Dorsolateral prefrontal cortex (tissue), 120 donors: ENCODE measurements at regions of chr2 and their contacts with region 1.

Region 1: DNA sequence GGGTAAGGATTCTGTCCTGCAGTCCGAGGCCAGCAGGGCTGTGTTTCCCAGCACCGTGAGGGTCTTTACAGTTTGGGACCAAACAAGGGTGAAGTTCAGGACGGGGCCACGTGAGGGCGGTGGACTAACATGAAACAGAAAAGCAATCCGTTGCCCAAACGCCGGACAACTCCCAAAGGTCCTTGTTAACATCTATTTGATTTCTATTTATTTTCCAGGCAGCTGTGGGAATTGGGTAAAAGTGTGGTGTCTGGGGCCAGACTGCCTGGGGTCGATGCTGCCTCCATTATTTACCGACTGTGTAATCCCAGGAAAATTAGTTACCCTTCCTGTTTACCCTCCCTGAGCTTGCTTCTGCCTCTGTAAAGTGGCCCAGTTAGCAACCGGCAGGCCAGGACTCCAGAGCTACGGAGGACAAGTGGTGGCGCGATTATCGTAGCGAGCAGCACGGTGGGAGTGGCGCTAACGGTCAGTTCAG is 66.3 kb upstream of the TCF7L1 start:
- DNase-seq: peak; percentile 43 to 78 (median 68)
- H3K4me3 ChIP-seq: peak overlapping the region in 56 of 59 donors; percentile 2 to 61 (median 40)
- H3K27ac ChIP-seq: no peak overlapping the region
- H3K27me3 ChIP-seq: no peaks in the 10 kb centered on the region
- CTCF ChIP-seq: peak; percentile 44 to 95 (median 82)

Region 2: GRCh38 chr2:85234868-85235267 is 168.0 kb after region 1 on chr2:
- intact Hi-C with region 1: loop called in 1 of 2 experiments (anchors 5 kb)
- DNase-seq: no peak
- H3K4me3 ChIP-seq: no peak overlapping the region
- H3K27ac ChIP-seq: peak overlapping the region in 18 of 59 donors; percentile 1 to 57 (median 29)
- H3K27me3 ChIP-seq: no peaks in the 10 kb centered on the region
- CTCF ChIP-seq: no peak

Region 3: GRCh38 chr2:85282914-85283313 is 216.0 kb after region 1 on chr2:
- intact Hi-C with region 1: loop called (anchors 2 to 5 kb)
- DNase-seq: no peak
- H3K4me3 ChIP-seq: no peak overlapping the region
- H3K27ac ChIP-seq: no peak overlapping the region
- H3K27me3 ChIP-seq: no peaks in the 10 kb centered on the region
- CTCF ChIP-seq: no peak